CD8-positive, alpha-beta T cell (primary cell): ENCODE measurements at regions of chr12 and their contacts with region 1.

Region 1: GRCh38 chr12:42568952-42569915 is 20.3 kb downstream of the PRICKLE1 start:
- DNase-seq: peak in 2 of 9 experiments; percentile 19 to 24
- ATAC-seq: no peak
- H3K4me3 ChIP-seq: no peak overlapping the region
- H3K4me3 Mint-ChIP-seq: no peak overlapping the region
- H3K27ac ChIP-seq: no peak overlapping the region
- H3K27ac Mint-ChIP-seq: no peak overlapping the region
- H3K4me1 ChIP-seq: no peaks in the 10 kb centered on the region
- H3K4me1 Mint-ChIP-seq: no peaks in the 10 kb centered on the region
- H3K27me3 ChIP-seq: no peaks in the 10 kb centered on the region
- H3K27me3 Mint-ChIP-seq: peaks cover 8% of the 10 kb centered on the region
- CTCF ChIP-seq: no peak

Region 2: GRCh38 chr12:40622246-40622838 is 1946.9 kb before region 1 on chr12:
- CTCF ChIA-PET with region 1: no interaction called
- POLR2A ChIA-PET with region 1: no interaction called
- intact Hi-C with region 1: loop called in 1 of 2 experiments (anchors 5 kb)
- DNase-seq: peak in 4 of 9 experiments; percentile 6 to 26 (median 18)
- ATAC-seq: no peak
- H3K4me3 ChIP-seq: no peak overlapping the region
- H3K4me3 Mint-ChIP-seq: no peak overlapping the region
- H3K27ac ChIP-seq: no peak overlapping the region
- H3K27ac Mint-ChIP-seq: no peak overlapping the region
- H3K4me1 ChIP-seq: no peaks in the 10 kb centered on the region
- H3K4me1 Mint-ChIP-seq: no peaks in the 10 kb centered on the region
- H3K27me3 ChIP-seq: peaks cover 0 to 5% of the 10 kb centered on the region in 2 experiments
- H3K27me3 Mint-ChIP-seq: no peaks in the 10 kb centered on the region
- CTCF ChIP-seq: peak; percentile 37

Region 3: GRCh38 chr12:40946612-40947194 is 1622.5 kb before region 1 on chr12:
- CTCF ChIA-PET with region 1: no interaction called
- POLR2A ChIA-PET with region 1: no interaction called
- intact Hi-C with region 1: loop called (anchors 10 kb)
- DNase-seq: peak in 2 of 9 experiments; percentile 17 to 33
- ATAC-seq: no peak
- H3K4me3 ChIP-seq: no peak overlapping the region
- H3K4me3 Mint-ChIP-seq: no peak overlapping the region
- H3K27ac ChIP-seq: no peak overlapping the region
- H3K27ac Mint-ChIP-seq: no peak overlapping the region
- H3K4me1 ChIP-seq: no peaks in the 10 kb centered on the region
- H3K4me1 Mint-ChIP-seq: no peaks in the 10 kb centered on the region
- H3K27me3 ChIP-seq: no peaks in the 10 kb centered on the region
- H3K27me3 Mint-ChIP-seq: no peaks in the 10 kb centered on the region
- CTCF ChIP-seq: peak; percentile 61

Region 4: DNA sequence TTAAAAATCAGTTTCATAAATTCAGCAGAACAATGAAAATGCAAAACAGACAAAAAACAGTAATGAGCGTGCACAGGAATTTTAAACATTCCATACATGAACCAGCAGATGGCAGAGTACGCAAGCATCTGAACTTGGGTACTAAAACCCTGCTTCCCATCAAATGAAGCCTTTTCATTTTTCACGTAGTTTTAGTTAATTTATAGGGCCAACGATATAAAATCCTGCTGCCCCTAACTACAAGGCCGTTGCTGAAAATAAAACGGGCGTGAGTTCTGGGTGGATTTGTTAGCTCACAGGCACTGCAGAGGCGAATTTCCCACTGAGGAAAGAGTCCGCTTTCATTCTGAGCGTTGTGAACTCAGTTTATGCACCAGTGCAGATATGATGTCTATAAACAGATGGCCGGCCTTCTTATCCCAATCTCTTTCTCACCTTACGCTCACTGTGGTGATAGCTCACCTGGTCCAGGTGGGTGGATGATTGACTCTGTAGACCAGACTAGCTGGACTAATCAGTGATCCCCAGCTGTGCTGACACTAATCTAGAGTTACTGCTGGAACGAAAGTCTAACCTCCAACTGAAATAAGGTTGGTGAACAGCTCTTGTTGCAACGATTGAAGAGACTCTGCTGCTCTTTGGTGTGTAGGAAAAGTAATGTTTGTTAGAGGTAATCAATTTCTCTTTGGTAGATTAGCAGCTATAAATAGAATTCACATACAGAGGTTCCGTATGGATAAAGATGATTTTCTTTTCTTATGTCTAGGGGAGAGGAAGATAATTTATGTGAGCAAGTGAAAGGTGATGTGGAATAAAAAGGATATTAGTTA is 1291.9 kb before region 1 on chr12:
- CTCF ChIA-PET with region 1: no interaction called
- POLR2A ChIA-PET with region 1: no interaction called
- intact Hi-C with region 1: loop called in 1 of 2 experiments (anchors 5 kb)
- DNase-seq: peak in 2 of 9 experiments; percentile 13 to 33
- ATAC-seq: no peak
- H3K4me3 ChIP-seq: no peak overlapping the region
- H3K4me3 Mint-ChIP-seq: no peak overlapping the region
- H3K27ac ChIP-seq: no peak overlapping the region
- H3K27ac Mint-ChIP-seq: no peak overlapping the region
- H3K4me1 ChIP-seq: no peaks in the 10 kb centered on the region
- H3K4me1 Mint-ChIP-seq: no peaks in the 10 kb centered on the region
- H3K27me3 ChIP-seq: no peaks in the 10 kb centered on the region
- H3K27me3 Mint-ChIP-seq: peaks cover 3% of the 10 kb centered on the region
- CTCF ChIP-seq: peak; percentile 37

Region 5: DNA sequence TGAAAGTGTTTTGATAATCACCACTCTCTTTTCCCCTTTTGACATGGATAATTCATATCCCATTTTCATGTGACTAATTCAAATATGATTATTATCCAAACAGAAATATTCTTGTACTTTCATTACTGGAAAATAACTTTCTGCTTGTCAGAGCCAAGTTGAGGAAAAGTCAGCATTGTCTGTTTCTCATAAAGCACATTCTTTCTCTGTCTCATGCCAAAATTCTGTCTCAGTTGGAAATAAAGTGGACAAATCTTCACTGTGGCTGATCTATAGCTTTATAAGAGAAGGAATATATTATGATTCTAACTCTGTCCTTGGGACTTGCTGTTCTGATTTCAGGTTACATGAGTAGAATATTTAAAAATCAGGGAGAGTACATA is 43.0 kb after region 1 on chr12:
- CTCF ChIA-PET with region 1: no interaction called
- POLR2A ChIA-PET with region 1: no interaction called
- intact Hi-C with region 1: no loop called
- DNase-seq: no peak
- ATAC-seq: no peak
- H3K4me3 ChIP-seq: no peak overlapping the region
- H3K4me3 Mint-ChIP-seq: no peak overlapping the region
- H3K27ac ChIP-seq: no peak overlapping the region
- H3K27ac Mint-ChIP-seq: no peak overlapping the region
- H3K4me1 ChIP-seq: no peaks in the 10 kb centered on the region
- H3K4me1 Mint-ChIP-seq: no peaks in the 10 kb centered on the region
- H3K27me3 ChIP-seq: no peaks in the 10 kb centered on the region
- H3K27me3 Mint-ChIP-seq: no peaks in the 10 kb centered on the region
- CTCF ChIP-seq: no peak